ENCODE measurements at regions of chr18 and their contacts with region 1.

Region 1: DNA sequence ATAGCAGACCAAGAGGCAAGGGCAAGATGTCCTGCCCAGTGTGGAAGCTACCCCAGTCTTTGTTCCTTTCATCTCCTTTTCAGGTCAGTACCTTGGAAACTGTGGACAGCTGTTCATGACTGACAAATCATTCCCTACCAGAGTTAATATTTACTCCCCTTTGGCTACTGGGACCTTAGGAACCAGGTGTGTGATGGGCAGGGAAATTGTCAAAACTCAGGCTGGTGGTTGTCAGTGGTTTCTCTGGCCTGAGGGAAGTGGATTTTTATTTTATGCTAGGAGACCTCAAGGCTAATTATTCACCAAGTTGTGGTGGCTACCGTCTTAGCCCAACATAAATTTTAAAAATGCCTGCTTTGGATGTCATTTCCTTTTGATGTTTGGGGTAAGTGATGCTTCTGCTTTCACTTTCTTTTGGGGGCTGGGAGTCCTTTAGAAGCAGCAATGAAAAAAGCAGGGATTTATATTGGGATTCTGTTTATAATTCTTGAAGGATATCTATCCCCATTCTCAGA is 119.3 kb downstream of the SETBP1 start:
- DNase-seq: peak; percentile 61
- ATAC-seq: peak; percentile 40
- H3K4me3 ChIP-seq: peak overlapping the region in 1 of 5 experiments; percentile 1
- H3K4me3 Mint-ChIP-seq: peak overlapping the region; percentile 65
- H3K27ac ChIP-seq: peak overlapping the region; percentile 72 to 83
- H3K27ac Mint-ChIP-seq: peak overlapping the region; percentile 91
- H3K4me1 ChIP-seq: peaks cover 44% of the 10 kb centered on the region in 2 donors
- H3K4me1 Mint-ChIP-seq: peaks cover 85% of the 10 kb centered on the region
- H3K27me3 ChIP-seq: no peaks in the 10 kb centered on the region
- H3K27me3 Mint-ChIP-seq: no peaks in the 10 kb centered on the region
- CTCF ChIP-seq: no peak

Region 2: GRCh38 chr18:43847164-43848091 is 952.5 kb before region 1 on chr18:
- CTCF ChIA-PET with region 1: no interaction called
- POLR2A ChIA-PET with region 1: no interaction called
- intact Hi-C with region 1: no loop called
- DNase-seq: no peak
- ATAC-seq: no peak
- H3K4me3 ChIP-seq: no peak overlapping the region
- H3K4me3 Mint-ChIP-seq: no peak overlapping the region
- H3K27ac ChIP-seq: no peak overlapping the region
- H3K27ac Mint-ChIP-seq: no peak overlapping the region
- H3K4me1 ChIP-seq: no peaks in the 10 kb centered on the region
- H3K4me1 Mint-ChIP-seq: no peaks in the 10 kb centered on the region
- H3K27me3 ChIP-seq: no peaks in the 10 kb centered on the region
- H3K27me3 Mint-ChIP-seq: no peaks in the 10 kb centered on the region
- CTCF ChIP-seq: no peak

Region 3: DNA sequence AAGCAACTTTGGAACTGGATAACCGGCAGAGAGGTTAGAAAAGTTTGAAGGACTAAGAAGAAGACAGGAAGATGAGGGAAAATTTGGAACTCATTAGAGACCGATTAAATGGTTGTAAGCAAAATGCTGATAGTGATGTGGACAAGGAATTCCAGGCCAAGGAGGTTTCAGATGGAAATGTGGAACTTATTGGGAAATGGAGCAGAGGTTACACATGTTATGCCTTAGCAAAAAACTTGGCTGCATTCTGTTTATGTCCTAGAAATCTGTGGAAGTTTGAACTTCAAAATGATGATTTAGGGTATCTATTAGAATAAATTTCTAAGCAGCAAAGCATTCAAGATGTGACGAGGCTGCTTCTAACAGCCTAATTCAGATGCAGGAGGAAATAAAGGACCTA is 847.6 kb before region 1 on chr18:
- CTCF ChIA-PET with region 1: no interaction called
- POLR2A ChIA-PET with region 1: no interaction called
- intact Hi-C with region 1: no loop called
- DNase-seq: no peak
- ATAC-seq: no peak
- H3K4me3 ChIP-seq: no peak overlapping the region
- H3K4me3 Mint-ChIP-seq: no peak overlapping the region
- H3K27ac ChIP-seq: no peak overlapping the region
- H3K27ac Mint-ChIP-seq: no peak overlapping the region
- H3K4me1 ChIP-seq: no peaks in the 10 kb centered on the region
- H3K4me1 Mint-ChIP-seq: no peaks in the 10 kb centered on the region
- H3K27me3 ChIP-seq: no peaks in the 10 kb centered on the region
- H3K27me3 Mint-ChIP-seq: no peaks in the 10 kb centered on the region
- CTCF ChIP-seq: no peak

Region 4: GRCh38 chr18:44725300-44726096 is 74.5 kb before region 1 on chr18:
- CTCF ChIA-PET with region 1: interaction called, 3 read pairs
- POLR2A ChIA-PET with region 1: interaction called, 6 read pairs
- intact Hi-C with region 1: loop called (anchors 2 kb)
- DNase-seq: peak; percentile 68
- ATAC-seq: peak; percentile 50
- H3K4me3 ChIP-seq: peak overlapping the region in 3 of 5 experiments; percentile 3 to 23 (median 7)
- H3K4me3 Mint-ChIP-seq: peak overlapping the region; percentile 70
- H3K27ac ChIP-seq: peak overlapping the region; percentile 80 to 85
- H3K27ac Mint-ChIP-seq: peak overlapping the region; percentile 88
- H3K4me1 ChIP-seq: peaks cover 99 to 100% of the 10 kb centered on the region in 2 donors
- H3K4me1 Mint-ChIP-seq: peaks cover 98% of the 10 kb centered on the region
- H3K27me3 ChIP-seq: no peaks in the 10 kb centered on the region
- H3K27me3 Mint-ChIP-seq: no peaks in the 10 kb centered on the region
- CTCF ChIP-seq: no peak

Region 5: DNA sequence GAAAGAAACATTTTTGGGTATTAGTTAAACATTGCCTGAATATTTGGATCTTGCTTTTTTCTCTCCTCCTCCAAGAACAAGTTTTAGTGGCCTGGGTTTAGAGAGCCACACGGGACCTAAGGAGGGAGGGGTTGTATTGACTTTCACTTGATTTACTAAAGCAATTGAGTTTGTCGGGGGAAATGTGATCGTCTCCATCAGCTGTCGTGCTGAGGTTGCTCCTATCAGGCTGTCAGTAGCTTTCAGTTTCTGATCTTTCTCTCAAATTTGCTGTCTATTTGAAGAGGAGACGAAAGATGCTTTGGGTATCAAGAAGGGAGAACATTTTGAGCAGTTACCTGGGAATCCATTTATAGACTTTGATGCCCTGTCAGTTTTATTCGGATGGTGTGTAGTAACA is 13.3 kb before region 1 on chr18:
- CTCF ChIA-PET with region 1: interaction called, 6 read pairs
- POLR2A ChIA-PET with region 1: no interaction called
- intact Hi-C with region 1: loop called (anchors 1 kb)
- DNase-seq: peak; percentile 64
- ATAC-seq: peak; percentile 77
- H3K4me3 ChIP-seq: peak overlapping the region in 4 of 5 experiments; percentile 6 to 59 (median 45)
- H3K4me3 Mint-ChIP-seq: peak overlapping the region; percentile 92
- H3K27ac ChIP-seq: peak overlapping the region; percentile 50 to 79
- H3K27ac Mint-ChIP-seq: peak overlapping the region; percentile 93
- H3K4me1 ChIP-seq: peaks cover 48 to 50% of the 10 kb centered on the region in 2 donors
- H3K4me1 Mint-ChIP-seq: peaks cover 71% of the 10 kb centered on the region
- H3K27me3 ChIP-seq: no peaks in the 10 kb centered on the region
- H3K27me3 Mint-ChIP-seq: no peaks in the 10 kb centered on the region
- CTCF ChIP-seq: no peak

Region 6: DNA sequence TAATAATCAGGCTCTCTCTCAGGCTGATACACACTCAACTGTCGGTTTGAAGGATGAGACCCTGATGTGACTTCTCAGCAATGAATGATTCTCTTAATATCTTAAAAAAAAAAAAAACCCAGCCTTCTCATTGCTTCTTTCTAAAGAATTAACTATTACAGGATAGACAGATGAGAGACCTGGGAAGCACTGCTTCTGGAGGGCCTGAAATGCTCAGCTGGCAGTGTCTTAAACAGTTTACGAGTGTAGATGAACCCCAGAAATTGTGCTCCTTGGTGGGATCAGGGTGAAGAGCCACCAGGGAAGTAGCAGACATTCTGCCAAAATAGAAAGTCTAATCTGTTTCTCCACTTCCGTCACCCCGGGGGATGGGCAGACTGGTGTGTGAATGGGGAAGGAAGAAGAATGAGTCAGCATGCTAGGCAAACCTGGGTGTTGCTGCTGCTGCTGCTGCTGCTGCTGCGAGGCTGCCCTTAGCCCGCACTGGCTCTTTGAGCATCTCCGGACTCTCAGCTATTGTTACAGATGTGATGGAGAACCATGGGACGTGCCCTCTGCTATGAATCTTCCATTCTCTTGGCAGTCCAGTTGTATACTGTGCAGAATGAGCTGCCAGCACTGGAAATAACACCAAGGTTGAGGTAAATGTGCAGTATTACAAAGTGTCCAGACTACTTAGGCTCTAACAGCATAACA is 39.2 kb after region 1 on chr18:
- CTCF ChIA-PET with region 1: interaction called, 3 read pairs
- POLR2A ChIA-PET with region 1: no interaction called
- intact Hi-C with region 1: loop called (anchors 5 kb)
- DNase-seq: peak; percentile 71
- ATAC-seq: peak; percentile 94
- H3K4me3 ChIP-seq: peak overlapping the region in 1 of 5 experiments; percentile 22
- H3K4me3 Mint-ChIP-seq: peak overlapping the region; percentile 65
- H3K27ac ChIP-seq: no peak overlapping the region
- H3K27ac Mint-ChIP-seq: peak overlapping the region; percentile 75
- H3K4me1 ChIP-seq: peaks cover 38 to 56% of the 10 kb centered on the region in 2 donors
- H3K4me1 Mint-ChIP-seq: peaks cover 82% of the 10 kb centered on the region
- H3K27me3 ChIP-seq: no peaks in the 10 kb centered on the region
- H3K27me3 Mint-ChIP-seq: no peaks in the 10 kb centered on the region
- CTCF ChIP-seq: no peak

Region 7: GRCh38 chr18:45071956-45072355 is 272.0 kb after region 1 on chr18:
- CTCF ChIA-PET with region 1: no interaction called
- POLR2A ChIA-PET with region 1: no interaction called
- intact Hi-C with region 1: no loop called
- DNase-seq: no peak
- ATAC-seq: no peak
- H3K4me3 ChIP-seq: no peak overlapping the region
- H3K4me3 Mint-ChIP-seq: no peak overlapping the region
- H3K27ac ChIP-seq: no peak overlapping the region
- H3K27ac Mint-ChIP-seq: no peak overlapping the region
- H3K4me1 ChIP-seq: peaks cover under 1% of the 10 kb centered on the region in 2 donors
- H3K4me1 Mint-ChIP-seq: peaks cover 5% of the 10 kb centered on the region
- H3K27me3 ChIP-seq: no peaks in the 10 kb centered on the region
- H3K27me3 Mint-ChIP-seq: no peaks in the 10 kb centered on the region
- CTCF ChIP-seq: no peak

Measured in B cell (primary cell).